ENCODE measurements at regions of chr6 and their contacts with region 1.

Region 1: DNA sequence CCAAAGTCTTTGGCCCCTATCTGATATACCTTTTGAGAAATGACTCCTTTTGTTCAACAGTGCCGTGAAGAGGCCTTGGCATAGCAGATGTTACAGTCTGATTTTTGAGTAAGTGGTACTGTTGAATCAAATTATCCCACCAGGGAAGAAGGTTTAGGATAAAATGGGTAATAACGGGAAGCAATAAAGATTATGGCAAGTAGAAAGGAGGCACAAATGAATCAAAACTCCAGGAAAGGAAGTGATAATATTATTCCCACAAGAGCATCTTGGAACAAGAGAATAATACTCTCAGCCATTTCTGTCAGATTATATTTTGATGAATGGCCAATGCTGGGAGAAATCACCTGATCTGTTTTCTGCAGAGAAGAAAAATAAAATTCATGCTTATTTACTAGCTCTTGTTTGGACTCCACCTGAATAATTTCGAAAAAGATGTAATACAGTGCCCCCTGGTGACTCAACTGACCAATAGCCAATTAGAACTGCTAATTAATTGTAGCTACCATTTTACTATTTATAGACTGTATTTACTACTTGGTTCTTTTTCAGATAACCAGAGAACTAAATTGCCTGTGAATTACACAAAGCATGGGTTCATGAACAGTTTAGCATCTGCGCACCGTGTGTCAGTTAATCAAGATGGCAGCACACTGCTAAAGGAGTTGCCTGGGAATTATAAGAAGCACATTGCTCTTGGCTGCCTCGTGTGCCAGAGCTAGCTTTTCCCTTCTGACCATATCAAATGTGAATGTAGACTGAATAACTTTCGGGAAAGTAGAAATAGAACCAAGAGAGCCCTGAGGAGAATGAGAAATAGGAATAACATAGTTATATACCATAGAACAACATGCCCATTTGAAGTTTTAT is 78.5 kb upstream of the TRDN start:
- DNase-seq: peak; percentile 7
- CTCF ChIP-seq: peak; percentile 49

Region 2: DNA sequence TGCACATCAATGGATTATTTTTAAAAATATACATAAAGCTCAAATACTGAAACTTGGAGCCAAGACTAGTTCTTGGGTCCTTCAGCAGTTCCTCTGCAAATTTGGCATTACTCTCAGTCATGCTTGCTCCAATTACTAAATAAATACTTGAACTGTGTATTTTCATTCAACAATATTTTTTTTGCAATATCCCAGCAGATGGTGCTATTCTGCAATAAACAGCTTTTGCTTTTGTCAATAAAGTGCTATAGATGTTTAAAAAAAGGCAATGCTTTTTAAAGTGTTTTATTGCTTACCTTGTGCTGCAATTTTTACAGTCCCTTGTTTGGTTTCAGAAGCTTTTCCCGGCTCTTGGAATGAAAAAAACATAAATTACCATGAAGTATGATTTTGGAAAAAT is 321.9 kb before region 1 on chr6:
- CTCF ChIA-PET with region 1: interaction called, 16 read pairs
- POLR2A ChIA-PET with region 1: no interaction called
- DNase-seq: no peak
- CTCF ChIP-seq: no peak

Region 3: GRCh38 chr6:123415844-123416468 is 299.3 kb before region 1 on chr6:
- CTCF ChIA-PET with region 1: interaction called, 95 read pairs
- POLR2A ChIA-PET with region 1: no interaction called
- DNase-seq: peak; percentile 29
- CTCF ChIP-seq: peak; percentile 58

Region 4: DNA sequence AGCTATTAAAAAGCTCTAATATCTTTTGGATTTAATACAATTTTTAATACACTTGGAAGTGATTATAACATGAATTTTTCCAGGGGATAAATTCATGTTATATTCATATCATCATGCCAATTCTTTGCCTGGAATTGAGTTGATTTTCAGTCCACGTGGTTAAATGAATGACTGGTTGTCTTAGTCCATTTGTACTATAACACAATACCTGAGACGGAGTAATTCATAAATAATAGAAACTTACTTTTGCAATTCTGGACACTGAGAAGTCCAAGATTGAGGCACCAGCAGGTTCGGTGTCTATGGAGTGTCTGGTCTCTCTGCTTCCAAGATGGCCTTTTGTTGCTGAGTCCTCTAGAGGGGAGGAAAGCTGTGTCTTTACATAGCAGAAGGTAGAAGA is 12.3 kb before region 1 on chr6:
- CTCF ChIA-PET with region 1: interaction called, 33 read pairs
- POLR2A ChIA-PET with region 1: no interaction called
- DNase-seq: no peak
- CTCF ChIP-seq: no peak

Region 5: GRCh38 chr6:123733180-123733956 is 18.1 kb after region 1 on chr6:
- CTCF ChIA-PET with region 1: interaction called, 10 read pairs
- POLR2A ChIA-PET with region 1: no interaction called
- DNase-seq: no peak
- CTCF ChIP-seq: no peak